Activated B cell treated with CpG ODN at 0.5 μM for 24 hours (primary cell): ENCODE measurements at regions of chr1 and their contacts with region 1.

Region 1: GRCh38 chr1:32240140-32240951 is 6.7 kb upstream of the FAM167B start:
- DNase-seq: peak; percentile 68
- ATAC-seq: peak; percentile 77
- H3K4me3 Mint-ChIP-seq: peak overlapping the region; percentile 89
- H3K27ac Mint-ChIP-seq: peak overlapping the region; percentile 87
- H3K4me1 Mint-ChIP-seq: peaks cover 21% of the 10 kb centered on the region
- H3K27me3 Mint-ChIP-seq: no peaks in the 10 kb centered on the region
- CTCF ChIP-seq: no peak

Region 2: GRCh38 chr1:32151319-32151787 is 89.0 kb before region 1 on chr1:
- CTCF ChIA-PET with region 1: no interaction called
- POLR2A ChIA-PET with region 1: no interaction called
- intact Hi-C with region 1: no loop called
- DNase-seq: no peak
- ATAC-seq: no peak
- H3K4me3 Mint-ChIP-seq: no peak overlapping the region
- H3K27ac Mint-ChIP-seq: no peak overlapping the region
- H3K4me1 Mint-ChIP-seq: peaks cover 2% of the 10 kb centered on the region
- H3K27me3 Mint-ChIP-seq: no peaks in the 10 kb centered on the region
- CTCF ChIP-seq: no peak

Region 3: GRCh38 chr1:32200226-32201010 is 39.9 kb before region 1 on chr1 and contains the start of gene CCDC28B:
- CTCF ChIA-PET with region 1: interaction called, 10 read pairs
- POLR2A ChIA-PET with region 1: interaction called, 20 read pairs
- intact Hi-C with region 1: no loop called
- DNase-seq: peak; percentile 62
- ATAC-seq: peak; percentile 51
- H3K4me3 Mint-ChIP-seq: peak within 1 kb of the TSS; percentile 87
- H3K27ac Mint-ChIP-seq: peak within 1 kb of the TSS; percentile 87
- H3K4me1 Mint-ChIP-seq: peaks cover 49% of the 10 kb centered on the region
- H3K27me3 Mint-ChIP-seq: no peaks in the 10 kb centered on the region
- CTCF ChIP-seq: no peak
- total RNA-seq, gene CCDC28B: 50.4 and 56.9 TPM in 2 replicates

Region 4: GRCh38 chr1:32255072-32256071 is 15.0 kb after region 1 on chr1:
- CTCF ChIA-PET with region 1: interaction called, 42 read pairs
- POLR2A ChIA-PET with region 1: interaction called, 142 read pairs
- intact Hi-C with region 1: loop called (anchors 1 kb)
- DNase-seq: no peak
- ATAC-seq: no peak
- H3K4me3 Mint-ChIP-seq: no peak overlapping the region
- H3K27ac Mint-ChIP-seq: peak overlapping the region; percentile 75
- H3K4me1 Mint-ChIP-seq: peaks cover 64% of the 10 kb centered on the region
- H3K27me3 Mint-ChIP-seq: no peaks in the 10 kb centered on the region
- CTCF ChIP-seq: no peak

Region 5: DNA sequence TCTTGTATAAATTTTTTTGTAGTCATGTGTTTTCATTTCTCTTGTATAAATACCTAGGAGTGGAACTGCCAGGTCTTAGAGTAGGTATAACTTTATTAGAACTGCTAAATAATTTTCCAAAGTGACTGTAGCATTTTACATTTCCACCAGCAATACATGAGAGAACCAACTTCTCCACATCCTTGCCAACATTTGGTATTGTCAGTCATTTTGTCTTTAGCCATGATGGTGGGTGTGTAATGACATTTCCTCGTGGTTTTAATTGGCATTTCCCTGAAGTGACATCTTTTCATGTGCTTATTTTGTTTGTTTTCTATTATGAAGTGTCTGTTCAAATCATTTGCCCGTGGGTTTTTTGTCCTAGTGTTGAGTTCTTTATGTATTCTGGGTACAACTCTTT is 328.6 kb after region 1 on chr1:
- CTCF ChIA-PET with region 1: no interaction called
- POLR2A ChIA-PET with region 1: no interaction called
- intact Hi-C with region 1: no loop called
- DNase-seq: no peak
- ATAC-seq: no peak
- H3K4me3 Mint-ChIP-seq: no peak overlapping the region
- H3K27ac Mint-ChIP-seq: no peak overlapping the region
- H3K4me1 Mint-ChIP-seq: no peaks in the 10 kb centered on the region
- H3K27me3 Mint-ChIP-seq: no peaks in the 10 kb centered on the region
- CTCF ChIP-seq: no peak

Region 6: GRCh38 chr1:33306648-33307493 is 1066.5 kb after region 1 on chr1:
- CTCF ChIA-PET with region 1: no interaction called
- POLR2A ChIA-PET with region 1: no interaction called
- intact Hi-C with region 1: no loop called
- DNase-seq: no peak
- ATAC-seq: no peak
- H3K4me3 Mint-ChIP-seq: no peak overlapping the region
- H3K27ac Mint-ChIP-seq: no peak overlapping the region
- H3K4me1 Mint-ChIP-seq: peaks cover 4% of the 10 kb centered on the region
- H3K27me3 Mint-ChIP-seq: peaks cover 18% of the 10 kb centered on the region
- CTCF ChIP-seq: no peak